ENCODE measurements at regions of chr2 and their contacts with region 1.

Region 1: DNA sequence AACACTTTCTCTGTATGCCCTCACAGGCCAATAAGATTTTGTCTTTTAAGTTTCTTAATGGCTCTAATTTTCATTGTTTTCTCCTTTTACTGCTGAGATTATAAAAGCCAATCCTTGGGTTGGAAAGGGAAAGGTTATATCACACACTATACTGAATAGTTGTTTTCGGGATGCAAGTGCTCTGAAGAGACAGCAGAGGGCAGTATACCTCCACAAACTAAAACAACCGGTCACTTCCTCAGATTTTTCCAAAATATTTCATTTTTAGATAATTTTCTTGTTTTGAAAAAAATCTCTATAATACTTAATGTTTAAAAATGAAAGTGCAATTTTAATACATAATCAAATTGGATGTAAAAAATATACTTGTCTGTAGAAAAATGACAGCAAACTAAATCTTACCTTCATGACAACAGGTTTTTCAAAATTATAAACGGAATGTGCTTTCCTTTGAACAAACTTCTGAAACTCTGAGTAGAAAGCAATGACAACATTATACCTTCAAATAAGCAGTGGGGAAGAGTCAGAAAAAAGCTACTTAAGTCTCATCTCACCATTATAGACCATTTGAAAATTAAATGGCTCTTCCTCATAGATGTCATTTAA is 82.7 kb downstream of the ORC4 start:
- DNase-seq: peak; percentile 49
- ATAC-seq: no peak
- H3K4me3 ChIP-seq: no peak overlapping the region
- H3K4me3 Mint-ChIP-seq: no peak overlapping the region
- H3K27ac ChIP-seq: no peak overlapping the region
- H3K27ac Mint-ChIP-seq: no peak overlapping the region
- H3K4me1 ChIP-seq: no peaks in the 10 kb centered on the region
- H3K4me1 Mint-ChIP-seq: no peaks in the 10 kb centered on the region
- H3K27me3 ChIP-seq: no peaks in the 10 kb centered on the region
- H3K27me3 Mint-ChIP-seq: no peaks in the 10 kb centered on the region
- CTCF ChIP-seq: peak; percentile 98

Region 2: DNA sequence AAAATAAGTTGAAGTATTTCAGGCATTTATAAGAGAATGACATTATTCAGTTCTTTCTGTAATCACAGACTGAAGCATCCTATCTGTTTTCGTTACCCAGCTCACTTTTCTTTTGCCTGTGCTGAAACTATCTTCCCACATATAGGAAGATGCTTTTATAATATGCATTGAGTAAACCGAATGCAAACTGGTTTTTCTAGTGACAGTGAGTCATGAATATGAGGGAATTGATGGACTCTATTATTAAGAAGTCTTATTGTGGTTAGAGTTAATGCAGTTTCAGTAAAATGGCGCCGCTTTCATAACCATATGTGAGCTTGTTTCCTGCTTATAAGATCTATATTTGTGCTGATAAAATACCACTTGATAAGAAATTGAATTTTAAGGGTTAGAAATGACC is 33.8 kb before region 1 on chr2:
- CTCF ChIA-PET with region 1: no interaction called
- POLR2A ChIA-PET with region 1: no interaction called
- intact Hi-C with region 1: no loop called
- DNase-seq: no peak
- ATAC-seq: no peak
- H3K4me3 ChIP-seq: no peak overlapping the region
- H3K4me3 Mint-ChIP-seq: no peak overlapping the region
- H3K27ac ChIP-seq: no peak overlapping the region
- H3K27ac Mint-ChIP-seq: no peak overlapping the region
- H3K4me1 ChIP-seq: no peaks in the 10 kb centered on the region
- H3K4me1 Mint-ChIP-seq: no peaks in the 10 kb centered on the region
- H3K27me3 ChIP-seq: no peaks in the 10 kb centered on the region
- H3K27me3 Mint-ChIP-seq: no peaks in the 10 kb centered on the region
- CTCF ChIP-seq: no peak

Region 3: GRCh38 chr2:148201075-148202004 is 263.5 kb after region 1 on chr2:
- CTCF ChIA-PET with region 1: no interaction called
- POLR2A ChIA-PET with region 1: no interaction called
- intact Hi-C with region 1: loop called (anchors 5 kb)
- DNase-seq: peak; percentile 26
- ATAC-seq: no peak
- H3K4me3 ChIP-seq: no peak overlapping the region
- H3K4me3 Mint-ChIP-seq: no peak overlapping the region
- H3K27ac ChIP-seq: no peak overlapping the region
- H3K27ac Mint-ChIP-seq: no peak overlapping the region
- H3K4me1 ChIP-seq: no peaks in the 10 kb centered on the region
- H3K4me1 Mint-ChIP-seq: no peaks in the 10 kb centered on the region
- H3K27me3 ChIP-seq: no peaks in the 10 kb centered on the region
- H3K27me3 Mint-ChIP-seq: no peaks in the 10 kb centered on the region
- CTCF ChIP-seq: peak; percentile 31

Region 4: GRCh38 chr2:148989882-148990493 is 1052.1 kb after region 1 on chr2:
- CTCF ChIA-PET with region 1: interaction called, 20 read pairs
- POLR2A ChIA-PET with region 1: no interaction called
- intact Hi-C with region 1: no loop called
- DNase-seq: peak; percentile 73
- ATAC-seq: peak; percentile 68
- H3K4me3 ChIP-seq: no peak overlapping the region
- H3K4me3 Mint-ChIP-seq: no peak overlapping the region
- H3K27ac ChIP-seq: no peak overlapping the region
- H3K27ac Mint-ChIP-seq: no peak overlapping the region
- H3K4me1 ChIP-seq: no peaks in the 10 kb centered on the region
- H3K4me1 Mint-ChIP-seq: peaks cover 8% of the 10 kb centered on the region
- H3K27me3 ChIP-seq: no peaks in the 10 kb centered on the region
- H3K27me3 Mint-ChIP-seq: no peaks in the 10 kb centered on the region
- CTCF ChIP-seq: peak; percentile 75